A549 (cell line): ENCODE measurements at regions of chr1 and their contacts with region 1.

Region 1: GRCh38 chr1:116139592-116140134 is 28.5 kb downstream of the MAB21L3 start:
- DNase-seq: no peak
- ATAC-seq: no peak; a peak in 1 of 6 replicates
- H3K4me3 ChIP-seq: no peak overlapping the region
- H3K27ac ChIP-seq: no peak overlapping the region
- H3K4me1 ChIP-seq: no peaks in the 10 kb centered on the region
- CTCF ChIP-seq: no peak
- EP300 ChIP-seq: no peak
- POLR2A ChIP-seq: no peak
- RAD21 ChIP-seq: no peak

Region 2: DNA sequence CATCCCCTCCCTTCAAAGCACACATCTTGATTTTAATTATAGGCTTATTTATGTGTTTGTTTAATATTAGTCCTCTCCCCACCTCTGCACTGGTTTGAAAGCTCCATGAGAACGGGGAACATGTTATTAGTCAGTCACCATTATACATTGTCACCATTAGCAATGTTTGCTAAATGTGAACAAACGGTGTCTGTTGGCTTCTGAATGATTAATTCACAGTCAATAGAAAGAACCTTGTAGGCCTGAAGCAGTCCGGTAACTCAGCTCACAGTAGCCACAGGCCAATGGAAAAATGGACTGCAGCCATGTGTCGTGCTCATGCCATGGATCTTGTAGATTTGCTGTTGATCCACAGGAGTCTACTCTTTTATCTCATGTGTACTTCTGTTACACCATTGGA is 249.1 kb before region 1 on chr1:
- CTCF ChIA-PET with region 1: no interaction called
- POLR2A ChIA-PET with region 1: no interaction called
- DNase-seq: no peak
- ATAC-seq: no peak
- H3K4me3 ChIP-seq: no peak overlapping the region
- H3K27ac ChIP-seq: no peak overlapping the region
- H3K4me1 ChIP-seq: no peaks in the 10 kb centered on the region
- CTCF ChIP-seq: no peak
- EP300 ChIP-seq: no peak
- POLR2A ChIP-seq: no peak
- RAD21 ChIP-seq: no peak

Region 3: GRCh38 chr1:116122955-116123757 is 16.5 kb before region 1 on chr1:
- CTCF ChIA-PET with region 1: interaction called, 16 read pairs
- POLR2A ChIA-PET with region 1: no interaction called
- DNase-seq: peak in 1 of 2 experiments; percentile 45
- ATAC-seq: peak; percentile 78 to 89; a peak in 5 of 6 replicates
- H3K4me3 ChIP-seq: no peak overlapping the region
- H3K27ac ChIP-seq: peak overlapping the region; percentile 38 to 56; a peak in 5 of 6 replicates
- H3K4me1 ChIP-seq: peaks cover 22% of the 10 kb centered on the region
- CTCF ChIP-seq: no peak
- EP300 ChIP-seq: no peak
- POLR2A ChIP-seq: no peak
- RAD21 ChIP-seq: no peak

Region 4: DNA sequence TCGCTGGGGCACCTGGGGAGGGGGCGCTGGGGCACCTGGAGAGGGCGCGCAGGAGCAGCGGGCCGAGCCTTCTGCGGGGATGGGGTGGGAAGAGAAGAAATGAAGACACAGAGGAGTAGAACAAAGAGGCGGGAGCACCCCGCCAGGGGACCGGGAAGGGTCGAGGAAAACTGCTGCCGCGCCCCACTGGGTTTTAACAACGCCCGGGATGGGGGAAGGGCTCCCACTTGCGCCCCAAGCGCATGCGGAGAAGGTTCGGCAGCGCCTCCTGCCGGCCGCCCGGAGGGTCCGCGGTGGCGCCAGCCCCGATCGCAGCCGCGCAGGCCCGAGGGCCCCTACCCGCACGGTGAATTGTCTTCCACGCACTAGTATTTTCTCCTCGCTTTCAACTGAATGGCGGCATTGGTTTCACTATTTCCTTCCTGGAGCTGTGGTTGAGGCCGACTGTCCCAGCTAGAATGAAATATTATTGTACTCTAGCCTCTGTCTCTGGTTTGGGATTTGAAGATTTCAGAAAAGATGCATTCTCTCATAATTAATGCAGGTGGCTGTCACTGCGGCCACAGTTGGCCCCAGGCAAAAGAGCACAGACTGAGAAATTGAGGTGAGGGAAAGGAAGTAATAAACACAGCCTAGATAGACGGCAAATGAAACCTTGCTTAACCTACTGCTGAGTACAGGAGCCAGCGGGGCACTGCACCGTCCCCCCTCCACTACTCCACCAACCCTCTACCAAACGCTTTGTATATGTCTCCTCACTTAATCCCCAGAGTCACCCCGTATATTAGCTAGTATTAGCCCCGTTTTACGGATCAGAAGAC is 28.8 kb after region 1 on chr1:
- CTCF ChIA-PET with region 1: interaction called, 13 read pairs
- POLR2A ChIA-PET with region 1: no interaction called
- DNase-seq: peak; percentile 48 to 51
- ATAC-seq: peak; percentile 94 to 98
- H3K4me3 ChIP-seq: peak overlapping the region; percentile 74
- H3K27ac ChIP-seq: peak overlapping the region; percentile 87 to 93
- H3K4me1 ChIP-seq: no peaks in the 10 kb centered on the region
- CTCF ChIP-seq: peak; percentile 86
- EP300 ChIP-seq: no peak
- POLR2A ChIP-seq: no peak
- RAD21 ChIP-seq: peak; percentile 11 to 61; a peak in 2 of 5 replicates

Region 5: DNA sequence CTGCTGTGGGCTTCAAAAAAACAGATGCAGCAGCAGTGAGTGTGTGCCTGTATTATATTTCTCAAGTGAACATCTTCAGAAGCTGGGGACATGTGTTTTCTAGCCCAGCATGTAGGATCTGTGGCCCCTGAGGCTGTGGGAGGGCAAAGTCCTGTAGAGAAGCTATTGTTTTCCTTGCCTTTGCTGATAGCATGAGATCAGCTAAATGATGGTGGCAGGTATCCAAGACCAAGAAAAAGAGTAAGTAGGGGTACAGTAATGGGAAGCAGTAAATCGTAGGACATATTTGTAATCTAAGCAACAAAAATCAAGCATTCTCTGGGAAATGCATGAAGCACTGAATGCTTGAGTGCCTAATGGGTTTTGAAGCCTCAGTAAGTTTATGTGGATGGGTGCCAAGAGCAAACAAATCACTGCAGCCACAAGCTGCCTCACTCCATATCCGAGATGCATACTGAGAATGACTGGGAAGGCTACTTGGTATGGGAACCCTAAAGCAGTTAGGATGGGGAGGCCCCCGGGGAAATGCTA is 332.8 kb after region 1 on chr1:
- CTCF ChIA-PET with region 1: interaction called, 19 read pairs
- POLR2A ChIA-PET with region 1: no interaction called
- DNase-seq: no peak
- ATAC-seq: no peak
- H3K4me3 ChIP-seq: no peak overlapping the region
- H3K27ac ChIP-seq: 0 out of 6 replicates have a peak overlapping the region, but pooled peaks of 1 of the 2 experiments have one; percentile 27
- H3K4me1 ChIP-seq: peaks cover 30% of the 10 kb centered on the region
- CTCF ChIP-seq: no peak
- EP300 ChIP-seq: no peak
- POLR2A ChIP-seq: no peak
- RAD21 ChIP-seq: no peak

Region 6: DNA sequence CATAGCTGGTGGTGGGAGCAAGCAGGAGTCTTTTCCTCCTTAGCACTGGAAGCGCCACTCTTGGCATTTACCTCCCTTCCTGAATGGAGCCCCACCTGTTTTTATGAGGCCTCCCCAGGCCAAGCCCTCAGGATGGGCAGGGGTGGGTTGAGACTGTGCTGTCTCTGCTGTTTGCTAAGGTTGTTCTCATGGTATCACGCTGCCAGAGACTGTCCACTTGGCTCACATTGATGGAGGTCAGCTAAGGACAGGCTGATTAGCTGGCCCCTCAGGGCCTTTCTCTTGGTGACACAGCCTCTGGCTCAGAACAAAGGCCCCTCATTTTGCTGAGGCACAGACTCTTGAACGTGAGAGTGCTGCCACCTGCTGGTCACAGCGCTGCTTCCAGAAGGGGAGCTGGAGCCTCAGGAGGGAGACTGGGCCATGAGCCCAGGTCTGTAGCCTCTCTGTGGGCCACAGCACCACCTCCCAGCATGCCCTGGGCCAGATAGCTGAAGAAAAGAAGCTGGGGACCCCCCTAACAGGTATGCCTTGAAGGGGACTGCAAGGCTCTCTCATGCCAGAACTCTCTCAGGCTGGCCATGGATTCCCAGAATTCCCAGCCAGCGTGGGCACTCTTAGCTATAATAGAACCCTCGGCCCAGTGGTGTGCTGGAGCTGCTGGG is 345.5 kb after region 1 on chr1:
- CTCF ChIA-PET with region 1: interaction called, 209 read pairs
- POLR2A ChIA-PET with region 1: interaction called, 3 read pairs
- DNase-seq: peak; percentile 51 to 66
- ATAC-seq: peak; percentile 90 to 98
- H3K4me3 ChIP-seq: no peak overlapping the region
- H3K27ac ChIP-seq: peak overlapping the region in 1 of 2 experiments; percentile 55; a peak in 3 of 6 replicates
- H3K4me1 ChIP-seq: 0 out of 3 replicates have a peak, but pooled peaks cover 2% of the 10 kb centered on the region
- CTCF ChIP-seq: peak; percentile 78
- EP300 ChIP-seq: no peak
- POLR2A ChIP-seq: no peak
- RAD21 ChIP-seq: peak; percentile 83 to 85

Region 7: DNA sequence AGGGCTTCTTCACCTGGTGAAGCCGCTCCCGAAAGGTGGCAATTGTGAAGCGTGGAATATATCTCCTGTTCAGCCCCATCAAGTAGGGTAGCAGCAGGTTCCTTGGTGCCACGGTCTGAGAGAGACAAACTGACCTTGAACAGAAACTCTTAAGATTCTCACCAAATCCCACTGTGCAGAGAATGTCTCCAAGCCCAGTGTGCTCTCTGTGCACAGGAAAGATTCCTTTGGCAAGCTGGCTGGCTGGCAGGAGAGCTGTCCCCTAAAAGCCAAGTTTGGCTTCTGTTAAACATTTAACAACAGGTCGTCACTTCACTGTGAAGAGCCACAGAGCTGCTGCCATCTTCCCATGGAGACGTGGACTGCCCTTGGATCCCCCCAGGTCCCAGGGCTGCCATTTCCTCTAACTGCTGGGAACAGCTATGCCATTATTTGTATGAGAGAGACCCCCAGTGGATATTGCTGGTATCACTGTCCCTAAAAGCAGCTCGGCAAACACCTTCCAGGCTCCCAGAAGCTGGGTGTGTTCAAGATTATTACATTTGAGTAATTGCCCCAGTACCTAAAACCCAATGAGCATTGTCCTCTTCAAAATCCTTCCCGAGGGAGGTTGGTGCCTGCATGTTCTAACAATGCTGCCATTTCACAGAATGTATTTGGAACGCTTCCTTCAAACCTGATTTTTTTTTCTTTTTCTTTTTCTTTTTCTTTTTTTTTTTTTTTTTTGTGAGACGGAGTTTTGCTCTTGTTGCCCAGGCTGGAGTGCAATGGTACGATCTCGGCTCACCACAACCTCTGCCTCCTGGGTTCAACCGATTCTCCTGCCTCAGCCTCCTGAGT is 359.3 kb after region 1 on chr1:
- CTCF ChIA-PET with region 1: interaction called, 108 read pairs
- POLR2A ChIA-PET with region 1: interaction called, 4 read pairs
- DNase-seq: peak; percentile 41 to 51
- ATAC-seq: peak; percentile 81 to 92
- H3K4me3 ChIP-seq: no peak overlapping the region
- H3K27ac ChIP-seq: peak overlapping the region in 1 of 2 experiments; percentile 64; a peak in 2 of 6 replicates
- H3K4me1 ChIP-seq: peaks cover 19% of the 10 kb centered on the region; the same call in 2 of the 3 replicates
- CTCF ChIP-seq: peak; percentile 65
- EP300 ChIP-seq: no peak
- POLR2A ChIP-seq: no peak
- RAD21 ChIP-seq: peak; percentile 81 to 82